ENCODE measurements at regions of chr1 and their contacts with region 1.

Region 1: GRCh38 chr1:27650539-27651175 is 15.7 kb upstream of the FGR start:
- DNase-seq: no peak
- ATAC-seq: peak; percentile 29

Region 2: DNA sequence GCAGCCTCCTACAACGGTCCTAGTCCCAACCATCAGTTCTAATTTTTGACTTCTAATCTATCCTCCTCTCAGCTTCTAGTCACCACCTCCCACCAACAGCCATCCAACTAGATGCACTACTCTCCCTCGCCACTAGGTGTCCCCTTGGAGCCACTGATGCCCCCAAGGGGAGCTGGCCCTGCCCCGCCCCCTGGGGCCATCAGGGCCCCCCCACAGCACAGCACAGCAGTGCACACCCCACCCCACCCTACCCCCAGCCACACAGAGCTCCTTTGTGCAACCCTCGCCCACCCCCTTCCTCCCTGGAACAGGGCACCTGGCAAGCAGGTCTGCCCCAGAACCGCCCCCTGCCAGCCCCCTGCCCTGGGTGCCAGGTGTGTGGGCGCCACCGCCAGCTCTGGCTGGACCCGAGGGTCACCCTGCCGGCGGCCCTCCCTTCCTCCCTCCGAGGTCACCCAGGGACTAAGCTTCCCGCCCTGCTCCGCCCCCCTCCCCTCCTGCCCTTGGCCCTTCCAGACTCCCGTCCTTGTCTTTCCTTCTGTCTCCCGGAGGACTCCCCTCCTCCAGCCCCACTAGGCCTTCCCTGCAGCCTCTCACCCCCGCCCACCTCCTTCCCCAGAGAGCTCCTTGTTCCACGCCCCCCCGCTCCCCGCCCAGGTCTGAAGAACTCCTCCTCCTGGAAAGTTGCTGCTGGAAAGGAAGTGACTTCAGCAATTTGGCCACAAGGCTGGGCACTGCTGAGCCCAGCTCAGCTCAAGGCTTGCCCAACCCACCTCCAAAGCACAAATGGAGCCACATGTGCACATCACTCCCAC is 93.7 kb before region 1 on chr1:
- intact Hi-C with region 1: loop called (anchors 5 kb)
- DNase-seq: peak; percentile 96
- ATAC-seq: peak; percentile 69

Measured in Right ventricle myocardium inferior (tissue), 1 donor.